ENCODE measurements at regions of chr14 and their contacts with region 1.

Region 1: DNA sequence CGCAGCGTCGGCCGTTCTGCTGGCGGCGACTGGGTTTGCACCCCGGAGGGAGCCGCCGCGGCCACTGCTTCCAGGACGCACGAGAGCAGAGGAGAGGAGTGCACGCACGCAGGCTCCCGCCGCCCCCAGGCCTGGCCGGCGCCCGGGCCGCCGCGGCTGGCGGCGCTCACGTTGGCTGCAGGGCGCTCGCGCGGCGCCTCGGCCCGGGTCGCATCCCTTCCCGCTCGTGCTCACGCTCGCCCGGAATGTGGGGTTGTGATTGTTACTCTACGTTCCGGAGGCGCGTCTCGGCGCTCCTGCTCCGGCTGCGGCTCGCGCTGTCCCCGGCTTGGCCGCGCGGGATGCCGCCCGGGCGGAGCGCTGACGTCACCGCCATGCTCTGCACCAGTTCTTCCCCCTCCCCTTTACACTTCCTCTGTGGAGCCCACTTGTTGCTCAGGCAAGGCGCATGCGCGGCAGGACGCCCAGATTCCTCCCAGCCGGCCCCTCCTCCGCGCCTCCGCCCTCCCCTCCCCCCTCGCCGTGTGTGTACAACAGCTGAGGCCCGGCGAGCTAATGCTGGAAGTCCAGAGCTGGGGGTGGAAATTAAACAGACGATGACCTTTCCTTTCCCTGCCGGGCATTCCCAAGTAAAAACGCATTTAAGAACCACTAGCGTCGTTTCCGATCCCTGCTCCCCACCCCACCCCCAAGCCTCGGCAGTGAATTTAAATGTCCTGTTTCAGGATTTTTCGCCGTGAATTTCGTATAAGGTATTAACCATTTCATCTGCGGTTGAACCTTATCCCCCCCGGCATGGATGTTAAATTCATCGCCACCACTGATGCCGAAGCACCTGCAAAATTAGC is at the start of gene IRF2BPL:
- DNase-seq: peak; percentile 89 to 98 (median 93)
- ATAC-seq: peak; percentile 72 to 77 (median 74)
- H3K4me3 ChIP-seq: peak within 1 kb of the TSS; percentile 85 to 95
- H3K4me3 Mint-ChIP-seq: peak within 1 kb of the TSS; percentile 88 to 99 (median 91)
- H3K27ac ChIP-seq: peak within 1 kb of the TSS; percentile 98
- H3K27ac Mint-ChIP-seq: peak within 1 kb of the TSS; percentile 94 to 97
- H3K4me1 ChIP-seq: peaks cover 46 to 81% of the 10 kb centered on the region in 2 experiments
- H3K4me1 Mint-ChIP-seq: peaks cover 62 to 73% (median 67%) of the 10 kb centered on the region in 3 donors
- H3K27me3 ChIP-seq: no peaks in the 10 kb centered on the region
- H3K27me3 Mint-ChIP-seq: no peaks in the 10 kb centered on the region
- total RNA-seq, gene IRF2BPL: 32.6 to 50.4 (median 38.8) TPM

Region 2: GRCh38 chr14:76710056-76711010 is 318.3 kb before region 1 on chr14:
- CTCF ChIA-PET with region 1: no interaction called
- POLR2A ChIA-PET with region 1: interaction called in 1 of 2 experiments, 11 read pairs
- DNase-seq: peak in 14 of 35 experiments; percentile 3 to 67 (median 8)
- ATAC-seq: peak in 2 of 4 experiments; percentile 28 to 32
- H3K4me3 ChIP-seq: no peak overlapping the region
- H3K4me3 Mint-ChIP-seq: no peak overlapping the region
- H3K27ac ChIP-seq: no peak overlapping the region
- H3K27ac Mint-ChIP-seq: no peak overlapping the region
- H3K4me1 ChIP-seq: no peaks in the 10 kb centered on the region
- H3K4me1 Mint-ChIP-seq: no peaks in the 10 kb centered on the region
- H3K27me3 ChIP-seq: peaks cover 0 to 13% of the 10 kb centered on the region in 2 experiments
- H3K27me3 Mint-ChIP-seq: peaks cover 10 to 14% of the 10 kb centered on the region in 2 donors

Region 3: DNA sequence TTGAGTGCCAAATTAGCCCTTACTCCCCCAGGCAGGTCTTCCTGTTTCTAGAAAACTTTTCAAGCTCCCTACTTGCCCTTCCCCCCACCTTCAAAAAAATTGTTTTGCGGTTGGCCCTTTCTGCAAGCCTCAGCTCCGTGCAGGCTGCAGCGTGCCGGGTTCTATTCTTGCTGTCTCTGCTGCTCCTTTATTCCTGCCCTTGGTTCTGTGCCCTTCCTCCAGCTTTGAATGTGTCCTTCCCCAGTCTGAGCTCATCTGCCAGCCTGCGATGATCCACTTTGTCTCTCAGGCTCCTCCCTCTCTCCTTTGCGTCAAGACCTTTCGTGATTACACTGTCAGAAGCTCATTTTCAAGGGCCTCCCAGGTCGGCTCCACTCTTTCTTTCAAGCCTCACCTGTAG is 98.7 kb before region 1 on chr14:
- CTCF ChIA-PET with region 1: interaction called in 1 of 2 experiments, 4 read pairs
- POLR2A ChIA-PET with region 1: interaction called, 6 to 17 read pairs
- DNase-seq: peak in 34 of 35 experiments; percentile 46 to 88 (median 65)
- ATAC-seq: peak; percentile 59 to 84 (median 66)
- H3K4me3 ChIP-seq: peak overlapping the region; percentile 11 to 24
- H3K4me3 Mint-ChIP-seq: peak overlapping the region; percentile 56 to 70 (median 61)
- H3K27ac ChIP-seq: peak overlapping the region; percentile 48
- H3K27ac Mint-ChIP-seq: peak overlapping the region; percentile 76 to 88
- H3K4me1 ChIP-seq: peaks cover 36 to 80% of the 10 kb centered on the region in 2 experiments
- H3K4me1 Mint-ChIP-seq: peaks cover 82 to 94% (median 88%) of the 10 kb centered on the region in 3 donors
- H3K27me3 ChIP-seq: no peaks in the 10 kb centered on the region
- H3K27me3 Mint-ChIP-seq: no peaks in the 10 kb centered on the region

Region 4: GRCh38 chr14:77003950-77004752 is 24.5 kb before region 1 on chr14:
- CTCF ChIA-PET with region 1: no interaction called
- POLR2A ChIA-PET with region 1: no interaction called
- DNase-seq: no peak
- ATAC-seq: no peak
- H3K4me3 ChIP-seq: no peak overlapping the region
- H3K4me3 Mint-ChIP-seq: no peak overlapping the region
- H3K27ac ChIP-seq: no peak overlapping the region
- H3K27ac Mint-ChIP-seq: no peak overlapping the region
- H3K4me1 ChIP-seq: peaks cover 3 to 8% of the 10 kb centered on the region in 2 experiments
- H3K4me1 Mint-ChIP-seq: peaks cover 6 to 9% (median 8%) of the 10 kb centered on the region in 3 donors
- H3K27me3 ChIP-seq: peaks cover 0 to 9% of the 10 kb centered on the region in 2 experiments
- H3K27me3 Mint-ChIP-seq: no peaks in the 10 kb centered on the region

Region 5: DNA sequence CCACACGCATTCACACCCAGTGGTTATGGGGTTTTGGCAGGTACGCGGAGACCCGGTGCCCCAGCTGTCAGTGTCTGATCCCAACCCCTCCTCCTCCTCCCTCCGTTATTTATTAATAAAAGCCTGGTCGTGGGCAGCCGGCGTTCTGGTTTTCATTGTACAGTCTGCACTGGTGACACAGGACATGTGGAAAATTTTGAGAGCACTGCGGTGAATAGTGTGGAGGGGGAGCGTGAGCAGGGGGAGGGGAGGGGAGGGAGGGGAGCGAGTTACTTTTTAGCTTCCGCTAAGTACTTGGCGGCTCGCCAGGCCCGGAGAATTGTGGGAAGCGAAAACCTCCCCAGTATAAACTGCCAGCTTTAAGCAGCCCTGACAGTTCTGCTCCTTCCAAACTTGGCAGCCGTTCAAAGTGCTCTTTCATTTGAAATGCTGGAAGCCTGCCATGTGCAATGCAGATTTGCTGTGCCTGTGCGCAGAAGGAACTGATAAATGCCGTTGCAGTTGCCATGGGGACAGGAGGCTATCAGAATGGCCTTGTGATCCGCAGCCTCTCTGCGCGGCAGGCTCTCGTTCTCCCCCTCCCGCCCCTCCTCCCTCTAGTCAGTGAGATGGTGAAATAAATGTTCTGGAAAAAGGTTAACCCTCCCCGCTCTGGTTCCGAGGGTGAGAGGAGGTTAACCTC is 11.6 kb after region 1 on chr14:
- CTCF ChIA-PET with region 1: interaction called, 3 to 31 read pairs
- POLR2A ChIA-PET with region 1: interaction called, 3 to 41 read pairs
- DNase-seq: peak; percentile 95 to 99 (median 98)
- ATAC-seq: peak; percentile 80 to 86 (median 82)
- H3K4me3 ChIP-seq: peak overlapping the region; percentile 39 to 44
- H3K4me3 Mint-ChIP-seq: peak overlapping the region; percentile 79 to 83 (median 81)
- H3K27ac ChIP-seq: peak overlapping the region; percentile 95
- H3K27ac Mint-ChIP-seq: peak overlapping the region; percentile 97 to 99
- H3K4me1 ChIP-seq: peaks cover 46 to 84% of the 10 kb centered on the region in 2 experiments
- H3K4me1 Mint-ChIP-seq: peaks cover 86 to 94% (median 86%) of the 10 kb centered on the region in 3 donors
- H3K27me3 ChIP-seq: no peaks in the 10 kb centered on the region
- H3K27me3 Mint-ChIP-seq: no peaks in the 10 kb centered on the region

Region 6: DNA sequence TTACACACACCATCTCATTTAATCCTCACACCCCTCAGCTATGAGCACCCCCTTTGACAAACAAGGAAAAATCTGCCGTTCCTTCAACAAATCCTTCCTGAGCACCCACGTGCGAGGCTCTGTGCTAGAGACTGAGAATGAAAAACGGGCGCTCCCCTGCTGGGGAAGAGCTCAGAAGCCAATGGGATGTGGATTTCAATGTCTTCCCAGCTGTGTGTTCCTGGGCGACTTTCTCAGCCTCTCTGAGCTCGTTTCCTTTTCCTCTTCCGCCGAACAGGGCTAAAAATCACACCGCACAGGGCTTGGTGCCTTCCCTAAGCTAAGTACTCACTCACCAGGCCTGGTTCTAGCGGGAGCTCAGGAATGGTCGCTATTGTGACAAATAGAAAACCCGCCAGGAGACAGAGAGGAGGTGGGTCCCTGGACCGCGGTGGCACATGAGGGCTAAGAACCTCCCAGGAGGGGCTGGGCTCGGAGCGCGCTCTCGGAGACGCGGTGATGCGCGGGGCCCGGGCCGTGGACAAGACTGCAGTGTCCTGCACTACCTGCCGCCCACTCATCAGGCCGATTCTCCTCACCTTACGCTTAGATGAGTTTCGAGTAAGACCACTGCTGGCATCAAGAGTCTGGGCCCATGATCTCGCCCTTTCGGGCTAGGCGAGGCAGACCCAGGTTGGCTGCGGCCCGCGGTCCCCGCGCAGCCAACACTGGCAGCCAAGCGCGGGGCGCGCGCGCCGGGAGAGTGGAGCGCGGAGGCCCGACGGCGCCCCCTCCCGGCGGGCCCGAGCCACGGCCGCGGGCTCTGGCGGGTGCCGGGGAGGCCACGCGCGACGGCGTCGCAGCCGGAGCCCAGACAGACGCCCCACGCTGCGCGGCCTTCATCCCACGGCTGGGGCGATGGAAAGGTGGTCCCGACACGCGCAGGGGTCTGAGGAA is 96.0 kb after region 1 on chr14:
- CTCF ChIA-PET with region 1: interaction called in 1 of 2 experiments, 7 read pairs
- POLR2A ChIA-PET with region 1: interaction called in 1 of 2 experiments, 10 read pairs
- DNase-seq: peak; percentile 25 to 85 (median 58)
- ATAC-seq: peak; percentile 82 to 87 (median 84)
- H3K4me3 ChIP-seq: peak overlapping the region; percentile 63 to 64
- H3K4me3 Mint-ChIP-seq: peak overlapping the region; percentile 79 to 83 (median 80)
- H3K27ac ChIP-seq: peak overlapping the region; percentile 52
- H3K27ac Mint-ChIP-seq: peak overlapping the region; percentile 61 to 97
- H3K4me1 ChIP-seq: peaks cover 12 to 59% of the 10 kb centered on the region in 2 experiments
- H3K4me1 Mint-ChIP-seq: peaks cover 40 to 55% (median 49%) of the 10 kb centered on the region in 3 donors
- H3K27me3 ChIP-seq: peaks cover 2 to 47% of the 10 kb centered on the region in 2 experiments
- H3K27me3 Mint-ChIP-seq: peaks cover 7 to 36% of the 10 kb centered on the region in 2 donors